ENCODE measurements at regions of chr15 and their contacts with region 1.

Region 1: DNA sequence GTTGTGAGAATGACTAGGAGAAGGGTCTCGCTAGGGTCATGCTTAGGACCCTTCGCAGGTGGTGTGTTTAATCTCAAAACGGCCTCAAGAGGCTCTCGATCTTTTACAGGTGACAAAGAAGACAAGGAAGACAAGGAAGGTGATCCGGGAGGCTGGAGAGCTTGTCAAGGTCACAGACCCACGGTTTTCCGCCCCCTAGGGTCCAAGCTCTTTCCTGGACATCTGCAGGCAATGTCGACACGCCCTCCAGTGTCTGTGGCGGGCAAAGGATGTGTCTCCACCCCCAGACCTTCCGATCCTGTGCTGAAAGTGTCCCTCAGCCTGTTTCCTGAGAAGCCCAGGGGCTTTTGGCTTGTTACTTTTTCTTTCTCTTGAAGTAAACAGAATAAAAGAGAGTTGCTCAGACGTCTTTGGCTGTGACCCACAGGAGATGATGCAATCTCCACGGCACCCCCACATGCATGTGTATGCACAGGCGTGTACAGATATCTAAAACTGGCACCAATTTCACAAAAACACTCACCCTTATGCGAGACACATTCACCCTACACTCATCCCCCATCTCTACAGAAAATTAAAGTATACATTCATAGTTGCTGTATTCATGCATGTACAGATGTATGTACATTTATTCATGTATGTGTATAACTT is 108.8 kb downstream of the KLF13 start:
- DNase-seq: peak; percentile 62 to 96 (median 84)
- ATAC-seq: peak; percentile 70
- H3K4me3 ChIP-seq: peak overlapping the region; percentile 43 to 46
- H3K4me3 Mint-ChIP-seq: peak overlapping the region; percentile 80
- H3K27ac ChIP-seq: peak overlapping the region; percentile 89 to 95
- H3K27ac Mint-ChIP-seq: peak overlapping the region; percentile 98
- H3K4me1 ChIP-seq: peaks cover 66% of the 10 kb centered on the region
- H3K4me1 Mint-ChIP-seq: peaks cover 83% of the 10 kb centered on the region
- H3K27me3 ChIP-seq: no peaks in the 10 kb centered on the region
- H3K27me3 Mint-ChIP-seq: no peaks in the 10 kb centered on the region
- CTCF ChIP-seq: peak; percentile 33

Region 2: DNA sequence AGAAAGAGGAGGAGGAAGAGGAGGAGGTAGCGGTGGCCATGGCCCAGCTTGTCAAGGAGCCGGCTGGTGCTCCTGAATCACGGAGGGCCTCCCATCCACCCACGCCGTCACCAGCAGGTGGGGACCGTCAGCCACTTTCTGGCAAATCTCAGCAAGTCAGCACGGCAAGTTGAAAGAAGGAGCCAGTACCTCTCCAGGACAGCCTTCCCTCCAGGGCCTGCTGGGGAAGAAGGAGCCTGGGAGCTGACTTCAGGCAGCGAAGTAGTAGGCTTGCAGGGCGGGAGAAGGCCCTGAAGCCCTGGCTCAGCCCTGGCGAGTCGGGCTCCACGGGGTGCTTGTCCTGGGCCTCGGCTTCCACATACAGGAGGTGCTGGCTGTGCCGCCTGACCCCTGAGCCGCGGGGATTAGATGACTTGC is 234.6 kb before region 1 on chr15:
- CTCF ChIA-PET with region 1: interaction called, 21 read pairs
- POLR2A ChIA-PET with region 1: no interaction called
- intact Hi-C with region 1: loop called in 1 of 2 experiments (anchors 1 kb)
- DNase-seq: peak; percentile 52 to 83 (median 71)
- ATAC-seq: peak; percentile 76
- H3K4me3 ChIP-seq: no peak overlapping the region
- H3K4me3 Mint-ChIP-seq: no peak overlapping the region
- H3K27ac ChIP-seq: no peak overlapping the region
- H3K27ac Mint-ChIP-seq: no peak overlapping the region
- H3K4me1 ChIP-seq: peaks cover 20% of the 10 kb centered on the region
- H3K4me1 Mint-ChIP-seq: peaks cover 20% of the 10 kb centered on the region
- H3K27me3 ChIP-seq: no peaks in the 10 kb centered on the region
- H3K27me3 Mint-ChIP-seq: no peaks in the 10 kb centered on the region
- CTCF ChIP-seq: peak; percentile 51

Region 3: DNA sequence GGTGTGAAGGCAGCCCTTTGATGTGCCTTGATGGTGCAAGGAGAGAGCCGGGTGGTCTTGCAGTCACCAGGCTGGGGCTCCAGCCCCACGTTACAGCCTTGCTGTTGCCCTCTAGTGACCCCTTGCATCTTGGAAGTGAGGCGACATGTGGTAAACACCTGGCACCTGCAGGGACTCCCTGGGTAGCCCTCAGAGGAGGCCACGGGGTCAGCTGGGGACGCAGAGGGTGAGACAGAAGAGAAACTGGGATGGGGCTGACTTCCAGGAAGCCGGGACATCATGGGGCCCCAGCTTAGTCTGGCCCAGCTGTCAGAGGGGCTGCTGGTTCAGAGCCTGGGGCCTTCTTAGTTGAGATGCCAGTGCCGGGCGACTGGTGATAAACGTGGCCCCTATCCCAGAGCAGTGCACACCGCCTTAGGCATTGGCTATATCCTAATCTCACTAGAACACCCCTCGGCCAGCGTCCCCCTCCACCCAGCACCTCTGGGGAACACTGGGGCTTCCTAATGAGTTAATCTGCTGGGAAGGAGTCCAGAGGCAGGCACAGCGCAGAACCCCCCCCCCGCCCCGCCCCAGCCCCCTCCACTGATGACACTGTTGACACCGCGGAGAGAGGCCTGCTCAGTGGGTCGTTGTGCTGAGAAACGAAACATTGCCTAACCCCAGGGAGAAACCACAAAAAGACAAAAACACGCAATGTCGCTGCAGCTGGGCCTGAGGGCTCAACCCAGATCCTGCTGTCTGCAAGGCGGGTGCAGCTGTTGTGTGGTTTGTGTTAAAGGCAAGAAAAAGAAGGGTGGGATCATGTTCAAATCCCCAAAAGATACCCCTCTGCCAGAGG is 169.3 kb before region 1 on chr15:
- CTCF ChIA-PET with region 1: interaction called, 3 read pairs
- POLR2A ChIA-PET with region 1: interaction called, 5 read pairs
- intact Hi-C with region 1: loop called (anchors 1 to 5 kb)
- DNase-seq: peak; percentile 51 to 90 (median 77)
- ATAC-seq: peak; percentile 81
- H3K4me3 ChIP-seq: peak overlapping the region in 1 of 2 experiments; percentile 42
- H3K4me3 Mint-ChIP-seq: peak overlapping the region; percentile 71
- H3K27ac ChIP-seq: peak overlapping the region; percentile 71 to 72
- H3K27ac Mint-ChIP-seq: peak overlapping the region; percentile 95
- H3K4me1 ChIP-seq: peaks cover 69% of the 10 kb centered on the region
- H3K4me1 Mint-ChIP-seq: peaks cover 96% of the 10 kb centered on the region
- H3K27me3 ChIP-seq: no peaks in the 10 kb centered on the region
- H3K27me3 Mint-ChIP-seq: no peaks in the 10 kb centered on the region
- CTCF ChIP-seq: no peak

Region 4: GRCh38 chr15:31391687-31392671 is 43.4 kb before region 1 on chr15:
- CTCF ChIA-PET with region 1: interaction called, 8 read pairs
- POLR2A ChIA-PET with region 1: interaction called, 47 read pairs
- intact Hi-C with region 1: loop called (anchors 1 kb)
- DNase-seq: peak; percentile 62 to 92 (median 86)
- ATAC-seq: peak; percentile 82
- H3K4me3 ChIP-seq: peak overlapping the region; percentile 86 to 95
- H3K4me3 Mint-ChIP-seq: peak overlapping the region; percentile 91
- H3K27ac ChIP-seq: peak overlapping the region; percentile 80 to 81
- H3K27ac Mint-ChIP-seq: peak overlapping the region; percentile 95
- H3K4me1 ChIP-seq: peaks cover 44% of the 10 kb centered on the region
- H3K4me1 Mint-ChIP-seq: peaks cover 61% of the 10 kb centered on the region
- H3K27me3 ChIP-seq: no peaks in the 10 kb centered on the region
- H3K27me3 Mint-ChIP-seq: no peaks in the 10 kb centered on the region
- CTCF ChIP-seq: no peak

Region 5: DNA sequence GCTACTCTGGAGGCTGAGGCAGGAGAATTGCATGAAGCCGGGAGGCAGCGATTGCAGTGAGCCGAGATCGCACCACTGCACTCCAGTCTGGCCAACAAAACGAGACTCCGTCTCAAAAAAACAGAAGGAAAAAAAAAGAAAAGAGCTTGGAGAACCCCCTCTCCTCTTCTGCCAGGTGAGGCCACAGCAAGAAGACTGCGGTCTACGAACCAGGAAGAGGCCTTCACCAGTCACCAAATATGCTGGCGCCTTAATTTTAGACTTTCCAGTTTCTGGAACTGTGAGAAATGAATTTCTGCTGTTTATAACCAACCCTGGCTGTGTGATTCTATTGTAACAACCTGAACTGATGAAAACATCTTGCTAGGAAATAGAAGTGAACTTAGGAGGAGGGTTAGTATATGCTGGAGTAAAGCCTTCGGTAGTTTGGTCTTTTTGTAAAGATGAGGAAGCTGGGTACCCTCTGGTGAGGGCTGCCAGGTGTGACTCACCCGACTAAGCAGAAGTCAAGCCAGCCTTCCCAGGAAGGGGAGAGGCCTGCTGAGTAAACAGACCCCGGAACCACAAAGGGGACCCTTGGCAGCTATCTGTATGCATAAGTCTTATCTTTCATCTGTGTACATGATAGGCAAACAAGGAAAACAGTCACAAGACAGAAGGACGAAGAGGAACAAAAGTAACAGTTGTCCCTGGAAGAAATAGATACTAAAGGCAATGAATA is 30.0 kb before region 1 on chr15:
- CTCF ChIA-PET with region 1: interaction called, 3 read pairs
- POLR2A ChIA-PET with region 1: interaction called, 17 read pairs
- intact Hi-C with region 1: loop called in 1 of 2 experiments (anchors 1 kb)
- DNase-seq: peak in 3 of 9 experiments; percentile 46 to 52 (median 46)
- ATAC-seq: peak; percentile 70
- H3K4me3 ChIP-seq: no peak overlapping the region
- H3K4me3 Mint-ChIP-seq: no peak overlapping the region
- H3K27ac ChIP-seq: peak overlapping the region; percentile 6 to 46
- H3K27ac Mint-ChIP-seq: peak overlapping the region; percentile 62
- H3K4me1 ChIP-seq: peaks cover 19% of the 10 kb centered on the region
- H3K4me1 Mint-ChIP-seq: peaks cover 18% of the 10 kb centered on the region
- H3K27me3 ChIP-seq: no peaks in the 10 kb centered on the region
- H3K27me3 Mint-ChIP-seq: no peaks in the 10 kb centered on the region
- CTCF ChIP-seq: no peak

Region 6: GRCh38 chr15:31483053-31483985 is 47.9 kb after region 1 on chr15:
- CTCF ChIA-PET with region 1: interaction called, 149 read pairs
- POLR2A ChIA-PET with region 1: interaction called, 65 read pairs
- intact Hi-C with region 1: loop called (anchors 1 kb)
- DNase-seq: peak; percentile 15 to 83 (median 60)
- ATAC-seq: peak; percentile 58
- H3K4me3 ChIP-seq: peak overlapping the region; percentile 60 to 67
- H3K4me3 Mint-ChIP-seq: peak overlapping the region; percentile 95
- H3K27ac ChIP-seq: peak overlapping the region in 1 of 2 experiments; percentile 59
- H3K27ac Mint-ChIP-seq: peak overlapping the region; percentile 97
- H3K4me1 ChIP-seq: peaks cover 44% of the 10 kb centered on the region
- H3K4me1 Mint-ChIP-seq: peaks cover 66% of the 10 kb centered on the region
- H3K27me3 ChIP-seq: peaks cover 0 to 3% of the 10 kb centered on the region in 2 experiments
- H3K27me3 Mint-ChIP-seq: no peaks in the 10 kb centered on the region
- CTCF ChIP-seq: no peak

Region 7: GRCh38 chr15:32029862-32030781 is 594.7 kb after region 1 on chr15 and contains the start of gene CHRNA7:
- CTCF ChIA-PET with region 1: no interaction called
- POLR2A ChIA-PET with region 1: no interaction called
- intact Hi-C with region 1: no loop called
- DNase-seq: peak in 2 of 9 experiments; percentile 8 to 11
- ATAC-seq: no peak
- H3K4me3 ChIP-seq: no peak within 1 kb of the TSS
- H3K4me3 Mint-ChIP-seq: peak within 1 kb of the TSS; percentile 30
- H3K27ac ChIP-seq: no peak within 1 kb of the TSS
- H3K27ac Mint-ChIP-seq: no peak within 1 kb of the TSS
- H3K4me1 ChIP-seq: no peaks in the 10 kb centered on the region
- H3K4me1 Mint-ChIP-seq: peaks cover 9% of the 10 kb centered on the region
- H3K27me3 ChIP-seq: peaks cover 10 to 15% of the 10 kb centered on the region in 2 experiments
- H3K27me3 Mint-ChIP-seq: peaks cover 47% of the 10 kb centered on the region
- CTCF ChIP-seq: no peak
- total RNA-seq, gene CHRNA7: not detected